CD8-positive, alpha-beta T cell (primary cell): ENCODE measurements at regions of chr1 and their contacts with region 1.

Region 1: DNA sequence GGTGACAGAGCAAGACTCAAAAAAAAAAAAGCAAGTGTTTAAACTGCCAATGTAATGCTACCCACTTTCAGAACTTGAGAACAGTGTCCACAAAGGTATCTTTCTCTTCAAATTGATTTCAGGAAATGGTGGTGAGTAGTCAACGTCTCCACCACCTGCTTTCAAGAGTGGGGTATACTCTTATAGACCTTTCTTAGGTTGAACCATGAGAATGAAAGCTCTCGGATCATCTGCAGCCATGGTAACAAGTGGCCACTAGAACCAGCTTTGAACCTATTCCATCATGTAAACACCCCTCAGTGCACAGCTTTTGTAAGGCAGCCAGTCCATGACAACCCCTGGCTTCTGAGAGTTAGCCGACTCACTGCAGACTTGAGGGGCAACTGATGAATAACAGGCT is 107.4 kb downstream of the NTPCR start:
- DNase-seq: no peak
- ATAC-seq: no peak
- H3K4me3 ChIP-seq: no peak overlapping the region
- H3K4me3 Mint-ChIP-seq: no peak overlapping the region
- H3K27ac ChIP-seq: no peak overlapping the region
- H3K27ac Mint-ChIP-seq: no peak overlapping the region
- H3K4me1 ChIP-seq: no peaks in the 10 kb centered on the region
- H3K4me1 Mint-ChIP-seq: no peaks in the 10 kb centered on the region
- H3K27me3 ChIP-seq: no peaks in the 10 kb centered on the region
- H3K27me3 Mint-ChIP-seq: no peaks in the 10 kb centered on the region
- CTCF ChIP-seq: no peak

Region 2: GRCh38 chr1:231836227-231836893 is 1221.5 kb before region 1 on chr1:
- CTCF ChIA-PET with region 1: no interaction called
- POLR2A ChIA-PET with region 1: no interaction called
- intact Hi-C with region 1: no loop called
- DNase-seq: no peak
- ATAC-seq: no peak
- H3K4me3 ChIP-seq: no peak overlapping the region
- H3K4me3 Mint-ChIP-seq: no peak overlapping the region
- H3K27ac ChIP-seq: no peak overlapping the region
- H3K27ac Mint-ChIP-seq: no peak overlapping the region
- H3K4me1 ChIP-seq: no peaks in the 10 kb centered on the region
- H3K4me1 Mint-ChIP-seq: no peaks in the 10 kb centered on the region
- H3K27me3 ChIP-seq: no peaks in the 10 kb centered on the region
- H3K27me3 Mint-ChIP-seq: no peaks in the 10 kb centered on the region
- CTCF ChIP-seq: no peak

Region 3: DNA sequence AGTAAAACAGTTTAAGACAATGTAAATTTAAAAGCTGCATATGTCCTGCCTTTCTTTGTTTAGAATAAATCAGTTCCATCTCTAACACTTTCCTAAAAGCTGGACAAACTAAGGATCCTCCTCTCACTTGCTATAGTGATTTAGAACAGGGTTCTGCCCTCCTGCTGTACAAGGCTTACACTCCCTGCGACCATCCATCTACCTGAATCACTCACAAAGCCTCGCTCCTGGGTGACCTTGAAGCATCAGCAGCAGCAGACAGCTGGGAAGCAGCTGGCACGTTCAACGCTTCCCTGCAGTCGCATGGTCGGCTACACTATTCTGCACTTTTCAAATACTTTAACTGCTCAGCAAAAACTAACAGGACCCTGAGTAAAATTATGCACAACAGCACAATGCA is 20.6 kb after region 1 on chr1:
- CTCF ChIA-PET with region 1: no interaction called
- POLR2A ChIA-PET with region 1: no interaction called
- intact Hi-C with region 1: loop called in 1 of 2 experiments (anchors 2 kb)
- DNase-seq: no peak
- ATAC-seq: no peak
- H3K4me3 ChIP-seq: no peak overlapping the region
- H3K4me3 Mint-ChIP-seq: no peak overlapping the region
- H3K27ac ChIP-seq: no peak overlapping the region
- H3K27ac Mint-ChIP-seq: no peak overlapping the region
- H3K4me1 ChIP-seq: no peaks in the 10 kb centered on the region
- H3K4me1 Mint-ChIP-seq: no peaks in the 10 kb centered on the region
- H3K27me3 ChIP-seq: no peaks in the 10 kb centered on the region
- H3K27me3 Mint-ChIP-seq: no peaks in the 10 kb centered on the region
- CTCF ChIP-seq: no peak